ENCODE measurements at regions of chr1 and their contacts with region 1.

Region 1: GRCh38 chr1:234722904-234723720 is 113.1 kb upstream of the IRF2BP2 start:
- DNase-seq: no peak
- ATAC-seq: peak; percentile 39 to 52
- H3K4me3 ChIP-seq: peak overlapping the region; percentile 10
- H3K27ac ChIP-seq: peak overlapping the region; percentile 99
- H3K4me1 ChIP-seq: peaks cover 97% of the 10 kb centered on the region
- H3K27me3 ChIP-seq: no peaks in the 10 kb centered on the region
- CTCF ChIP-seq: no peak

Region 2: GRCh38 chr1:234322979-234323378 is 400.1 kb before region 1 on chr1:
- intact Hi-C with region 1: no loop called
- DNase-seq: peak; percentile 78
- ATAC-seq: peak; percentile 41 to 48
- H3K4me3 ChIP-seq: no peak overlapping the region
- H3K27ac ChIP-seq: no peak overlapping the region
- H3K4me1 ChIP-seq: peaks cover 5% of the 10 kb centered on the region
- H3K27me3 ChIP-seq: peaks cover 15% of the 10 kb centered on the region
- CTCF ChIP-seq: peak; percentile 34

Region 3: DNA sequence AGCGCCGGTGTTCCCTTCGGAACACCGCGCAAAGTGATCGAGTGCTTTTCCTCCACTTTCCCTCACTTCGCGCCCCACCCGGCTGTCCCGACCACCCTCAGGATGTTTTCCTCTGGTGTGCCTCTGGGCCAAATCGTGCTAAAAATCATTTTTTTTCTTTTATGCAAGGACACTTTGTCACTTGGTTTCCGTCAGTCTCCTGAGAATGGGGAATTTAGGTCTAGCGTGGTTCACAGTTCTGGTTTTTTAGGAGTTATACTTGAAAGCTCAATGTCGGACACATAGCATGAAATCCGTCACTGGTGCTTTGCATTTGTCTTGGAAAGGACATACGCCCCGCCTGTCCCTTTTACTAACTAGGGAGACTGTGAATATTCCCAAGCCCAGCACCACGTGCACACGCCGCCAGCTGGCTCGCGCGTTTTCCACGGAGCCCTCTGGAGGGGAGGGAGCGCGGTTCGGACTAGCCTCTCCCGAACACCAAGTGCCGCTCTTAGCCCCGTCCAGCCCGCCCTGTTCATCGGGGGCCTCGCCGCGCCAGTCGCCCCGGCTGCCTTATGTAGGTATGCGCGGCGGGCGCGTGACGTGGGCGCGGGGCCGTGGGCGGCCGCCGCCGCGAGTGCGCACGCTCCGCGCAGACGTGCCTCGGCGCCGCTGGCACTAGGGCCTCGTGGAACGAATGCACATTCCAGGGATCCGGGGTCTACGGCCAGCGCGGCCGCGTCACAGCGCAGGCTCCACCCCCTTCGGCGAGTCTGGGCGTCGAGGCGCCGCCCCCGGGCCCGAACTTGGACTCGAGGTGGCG is 112.6 kb before region 1 on chr1:
- intact Hi-C with region 1: loop called (anchors 5 kb)
- DNase-seq: peak; percentile 98
- ATAC-seq: peak; percentile 85 to 89
- H3K4me3 ChIP-seq: peak overlapping the region; percentile 60
- H3K27ac ChIP-seq: peak overlapping the region; percentile 94
- H3K4me1 ChIP-seq: peaks cover 40% of the 10 kb centered on the region
- H3K27me3 ChIP-seq: no peaks in the 10 kb centered on the region
- CTCF ChIP-seq: no peak